ENCODE measurements at regions of chr18 and their contacts with region 1.

Region 1: DNA sequence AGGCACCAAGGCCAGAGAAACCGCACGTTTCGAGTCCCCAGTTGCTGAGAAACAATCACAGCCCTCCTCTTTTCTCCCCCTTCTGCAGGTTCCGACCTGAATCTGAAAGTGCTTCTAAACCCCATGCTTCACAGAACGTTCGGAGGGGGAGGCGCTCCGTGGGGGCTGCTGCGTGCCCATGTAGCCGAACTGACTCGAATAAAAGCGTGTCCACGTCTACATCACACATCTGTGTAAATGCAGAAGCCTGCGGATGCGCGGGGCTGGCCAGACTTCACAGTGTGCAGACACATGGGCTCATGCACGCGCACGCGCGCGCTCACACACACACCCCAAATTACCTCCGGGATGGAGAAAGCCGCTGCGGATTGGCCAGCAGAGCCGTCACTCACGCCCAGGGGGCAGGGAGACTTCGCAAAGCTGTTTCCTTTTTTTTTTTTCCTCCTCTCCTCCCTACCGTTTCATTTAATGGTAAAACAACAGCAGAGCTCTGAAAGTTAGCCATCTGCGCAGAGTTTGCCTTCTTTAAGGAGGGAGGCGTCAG is 2.3 kb downstream of the ZNF516 start:
- DNase-seq: peak; percentile 95
- ATAC-seq: peak; percentile 72
- H3K4me3 ChIP-seq: peak overlapping the region; percentile 84 to 96 (median 84)
- H3K27ac ChIP-seq: peak overlapping the region; percentile 100
- H3K4me1 ChIP-seq: peaks cover 35% of the 10 kb centered on the region
- H3K27me3 ChIP-seq: no peaks in the 10 kb centered on the region; a peak in 1 of 5 replicates
- CTCF ChIP-seq: no peak
- EP300 ChIP-seq: no peak
- POLR2A ChIP-seq: peak; percentile 39 to 70; a peak in 3 of 4 replicates
- RAD21 ChIP-seq: no peak

Region 2: DNA sequence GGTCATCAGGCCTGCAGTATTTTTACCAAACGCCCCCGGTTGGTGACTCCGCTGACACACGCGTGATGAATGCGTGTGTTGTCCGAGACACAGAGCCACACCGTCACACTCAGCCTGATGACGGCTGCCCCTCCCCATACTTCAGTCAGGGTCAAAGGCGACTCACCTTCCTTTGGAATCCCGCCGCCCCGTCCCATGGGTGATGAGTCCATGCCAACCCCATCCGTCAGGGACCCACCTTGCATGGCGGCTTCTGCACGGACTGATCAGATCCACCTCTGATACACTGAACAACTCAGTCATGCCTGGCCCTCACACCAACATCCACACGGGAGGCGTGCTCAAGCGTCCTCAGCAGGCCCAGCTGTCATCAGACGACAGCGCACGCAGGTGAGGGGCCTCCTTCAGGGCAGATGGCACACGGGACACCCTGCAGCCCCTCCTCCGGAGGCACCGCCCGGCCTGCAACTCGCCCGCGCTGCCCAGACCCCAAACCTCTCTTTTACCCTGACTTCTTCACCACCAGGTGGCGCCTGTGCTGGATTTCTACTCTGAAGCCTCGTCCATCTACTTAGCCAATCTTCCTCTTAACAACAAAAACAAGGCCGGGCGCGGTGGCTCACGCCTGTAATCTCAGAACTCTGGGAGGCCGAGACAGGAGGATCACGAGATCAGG is 86.9 kb before region 1 on chr18:
- CTCF ChIA-PET with region 1: no interaction called
- POLR2A ChIA-PET with region 1: no interaction called
- in situ Hi-C with region 1: no loop called
- intact Hi-C with region 1: loop called (anchors 10 kb)
- DNase-seq: peak; percentile 34
- ATAC-seq: peak; percentile 75
- H3K4me3 ChIP-seq: no peak overlapping the region
- H3K27ac ChIP-seq: no peak overlapping the region
- H3K4me1 ChIP-seq: no peaks in the 10 kb centered on the region
- H3K27me3 ChIP-seq: no peaks in the 10 kb centered on the region
- CTCF ChIP-seq: peak; percentile 73
- EP300 ChIP-seq: no peak
- POLR2A ChIP-seq: no peak
- RAD21 ChIP-seq: peak; percentile 49; the same call in 1 of the 2 replicates

Region 3: DNA sequence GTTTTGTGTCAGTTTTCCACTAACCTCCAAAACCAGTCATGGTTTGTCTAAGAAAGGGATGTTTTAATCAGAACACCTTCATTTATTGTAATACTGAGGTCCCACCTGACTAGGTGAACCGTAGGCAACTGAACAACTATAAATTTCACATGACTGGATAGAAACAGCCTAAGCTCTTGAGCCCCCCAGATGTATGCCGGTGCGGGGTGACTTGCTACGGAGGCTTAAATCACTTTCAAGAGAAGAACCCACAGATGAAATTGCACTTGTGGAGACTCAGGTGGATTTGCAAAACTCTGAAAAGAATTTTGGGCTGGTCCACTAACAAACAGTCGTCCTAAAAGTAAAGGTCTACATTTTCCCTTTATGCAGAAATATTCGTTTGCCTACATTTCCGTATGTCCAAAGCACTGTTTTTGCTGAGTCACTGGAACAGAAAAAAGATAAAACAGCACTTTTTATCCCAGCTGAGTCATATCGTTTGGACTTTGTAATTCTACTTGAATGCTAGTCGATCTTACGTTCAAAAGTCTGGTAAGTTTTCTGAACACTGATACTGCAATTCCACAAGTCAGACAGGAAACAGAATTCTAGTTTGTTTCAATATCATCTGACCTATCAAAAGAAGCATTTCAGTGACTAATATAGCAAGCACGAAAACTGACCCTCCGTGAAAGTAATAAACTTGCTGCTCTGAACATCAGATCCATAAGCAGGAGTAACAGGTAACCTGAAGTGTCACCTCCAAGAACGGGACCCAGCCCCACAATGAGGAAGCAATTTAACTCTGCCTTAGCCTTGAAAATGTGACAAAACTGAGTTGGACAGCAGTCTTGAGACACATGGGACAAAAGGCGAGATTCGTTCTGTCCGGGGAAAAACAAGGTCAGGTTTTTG is 15.8 kb before region 1 on chr18:
- CTCF ChIA-PET with region 1: no interaction called
- POLR2A ChIA-PET with region 1: interaction called, 9 read pairs
- in situ Hi-C with region 1: no loop called
- intact Hi-C with region 1: loop called (anchors 2 kb)
- DNase-seq: peak; percentile 88
- ATAC-seq: peak; percentile 58
- H3K4me3 ChIP-seq: peak overlapping the region; percentile 26 to 53 (median 32); a peak in 5 of 6 replicates
- H3K27ac ChIP-seq: peak overlapping the region; percentile 74
- H3K4me1 ChIP-seq: peaks cover 77% of the 10 kb centered on the region
- H3K27me3 ChIP-seq: no peaks in the 10 kb centered on the region
- CTCF ChIP-seq: no peak
- EP300 ChIP-seq: peak in 1 of 2 experiments; percentile 39; a peak in 1 of 4 replicates
- POLR2A ChIP-seq: no peak
- RAD21 ChIP-seq: no peak

Region 4: GRCh38 chr18:76503649-76504398 is 11.1 kb after region 1 on chr18:
- CTCF ChIA-PET with region 1: no interaction called
- POLR2A ChIA-PET with region 1: interaction called, 22 read pairs
- in situ Hi-C with region 1: no loop called
- intact Hi-C with region 1: no loop called
- DNase-seq: no peak
- ATAC-seq: peak; percentile 45; the same call in 2 of the 3 replicates
- H3K4me3 ChIP-seq: no peak overlapping the region
- H3K27ac ChIP-seq: no peak overlapping the region
- H3K4me1 ChIP-seq: peaks cover 24% of the 10 kb centered on the region
- H3K27me3 ChIP-seq: peaks cover 1 to 18% of the 10 kb centered on the region in 2 experiments; a peak in 2 of 5 replicates
- CTCF ChIP-seq: no peak
- EP300 ChIP-seq: no peak
- POLR2A ChIP-seq: no peak
- RAD21 ChIP-seq: no peak

Region 5: DNA sequence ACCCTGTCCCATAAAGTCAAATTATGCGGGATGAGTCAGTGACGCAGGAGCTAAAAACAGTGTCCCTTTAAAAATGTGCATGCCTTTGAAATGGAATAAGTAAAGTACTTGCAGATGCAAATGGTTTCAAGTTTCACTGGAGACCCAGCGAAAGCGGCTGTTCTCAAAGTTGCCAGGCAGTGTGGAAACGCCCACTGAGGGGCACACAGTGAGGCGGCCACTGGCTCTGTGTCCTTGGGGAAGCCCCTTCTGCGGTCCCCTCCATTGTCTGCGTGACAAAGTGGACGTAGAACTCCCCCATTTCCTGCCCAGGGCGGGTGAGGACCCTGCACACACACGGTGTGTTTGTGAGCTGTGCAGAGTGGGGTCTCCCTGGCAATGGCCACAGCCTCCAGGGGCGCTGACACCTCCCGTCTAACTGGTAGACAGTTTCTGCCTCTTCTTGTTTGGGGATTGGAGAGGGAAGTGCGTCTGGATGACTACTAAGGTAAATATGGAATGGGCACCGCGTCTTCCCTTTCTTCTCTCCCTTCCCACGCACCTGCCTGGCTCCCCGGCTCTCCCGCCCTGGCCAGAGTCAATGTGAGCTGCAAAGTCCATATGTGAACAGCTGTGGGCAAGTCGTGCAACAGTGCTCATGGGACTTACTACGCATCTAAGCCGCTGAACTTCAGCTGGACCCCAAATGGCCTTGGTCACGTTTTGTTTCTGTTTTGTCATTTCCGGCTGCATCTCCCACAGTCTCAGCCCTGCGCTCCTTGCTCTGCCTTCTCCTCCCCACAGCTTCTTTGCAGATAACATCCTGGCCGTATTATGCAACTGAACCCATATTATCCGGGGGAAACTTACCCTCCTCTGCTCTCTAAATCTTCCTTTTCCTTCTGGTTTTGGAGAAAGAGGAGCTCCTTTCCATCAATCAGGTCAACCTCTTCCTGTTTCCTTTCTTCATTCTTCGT is 36.0 kb after region 1 on chr18:
- CTCF ChIA-PET with region 1: no interaction called
- POLR2A ChIA-PET with region 1: interaction called, 7 read pairs
- in situ Hi-C with region 1: no loop called
- intact Hi-C with region 1: loop called (anchors 1 kb)
- DNase-seq: peak; percentile 50
- ATAC-seq: peak; percentile 85
- H3K4me3 ChIP-seq: peak overlapping the region; percentile 47 to 68 (median 49)
- H3K27ac ChIP-seq: no peak overlapping the region
- H3K4me1 ChIP-seq: peaks cover 25% of the 10 kb centered on the region
- H3K27me3 ChIP-seq: peaks cover 0 to 31% of the 10 kb centered on the region in 2 experiments; a peak in 3 of 5 replicates
- CTCF ChIP-seq: no peak
- EP300 ChIP-seq: no peak
- POLR2A ChIP-seq: no peak
- RAD21 ChIP-seq: no peak

Region 6: DNA sequence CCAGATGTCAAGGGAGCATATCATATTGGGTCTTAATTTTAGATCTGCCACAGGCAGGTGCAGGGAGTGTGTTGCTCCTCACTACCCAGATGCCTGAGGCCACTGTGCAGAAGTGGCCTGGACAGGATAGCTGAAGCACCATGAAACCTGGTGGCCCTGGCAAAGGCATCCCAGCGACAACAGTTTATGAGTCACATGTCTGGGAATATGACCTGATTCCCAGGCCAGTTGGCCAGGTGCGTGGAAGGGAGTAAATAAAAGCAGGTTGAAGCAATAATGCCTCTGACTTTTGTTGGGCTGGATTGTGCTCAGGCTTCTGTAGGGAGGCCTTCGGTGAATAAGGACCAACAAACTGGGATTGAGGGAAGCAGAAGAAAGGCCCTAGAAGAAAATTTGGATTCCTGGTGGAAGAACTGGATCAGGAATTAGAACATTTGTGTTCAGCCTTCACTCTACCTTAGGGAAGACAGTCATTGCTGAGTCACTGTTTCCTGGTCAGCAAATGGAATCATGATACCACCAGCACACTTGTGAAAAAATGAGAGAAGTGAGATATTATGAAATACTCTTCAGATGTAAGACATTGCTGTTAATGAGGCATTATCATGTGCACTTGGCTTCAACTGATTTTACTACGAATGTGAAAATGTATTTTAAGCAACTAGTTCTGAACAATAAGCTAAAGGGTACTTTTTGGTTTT is 80.7 kb after region 1 on chr18:
- CTCF ChIA-PET with region 1: no interaction called
- POLR2A ChIA-PET with region 1: no interaction called
- in situ Hi-C with region 1: no loop called
- intact Hi-C with region 1: loop called (anchors 5 kb)
- DNase-seq: no peak
- ATAC-seq: peak; percentile 38
- H3K4me3 ChIP-seq: no peak overlapping the region
- H3K27ac ChIP-seq: no peak overlapping the region
- H3K4me1 ChIP-seq: peaks cover 13% of the 10 kb centered on the region
- H3K27me3 ChIP-seq: peaks cover 3 to 4% of the 10 kb centered on the region in 2 experiments; a peak in 2 of 5 replicates
- CTCF ChIP-seq: no peak
- EP300 ChIP-seq: no peak
- POLR2A ChIP-seq: no peak
- RAD21 ChIP-seq: no peak

Region 7: DNA sequence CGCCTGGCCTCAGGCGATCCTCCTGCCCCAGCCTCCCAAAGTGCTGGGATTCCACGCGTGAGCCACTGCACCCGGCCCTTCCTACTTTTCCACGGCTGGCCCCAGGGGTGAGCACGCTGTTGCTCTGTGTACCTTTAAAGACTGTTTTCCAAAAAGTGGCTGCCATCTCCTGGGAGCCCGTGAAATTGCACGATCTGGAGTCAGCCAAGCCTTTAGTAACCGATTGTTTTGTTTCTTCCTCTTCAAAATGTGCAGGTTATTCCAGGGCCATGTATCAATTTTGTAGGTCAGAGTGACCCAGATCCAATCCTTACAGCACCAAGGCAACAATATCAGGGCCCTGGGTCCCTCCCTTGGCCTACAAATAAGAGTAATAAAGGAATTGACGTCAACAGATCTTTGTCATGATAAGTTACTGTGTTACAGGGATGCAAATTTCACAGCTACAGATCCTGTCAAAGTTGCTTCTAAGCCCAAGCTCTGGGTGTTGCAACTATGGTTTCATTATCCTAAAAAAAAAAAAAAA is 194.1 kb after region 1 on chr18:
- CTCF ChIA-PET with region 1: no interaction called
- POLR2A ChIA-PET with region 1: no interaction called
- in situ Hi-C with region 1: no loop called
- intact Hi-C with region 1: loop called (anchors 2 kb)
- DNase-seq: peak; percentile 48
- ATAC-seq: peak; percentile 92
- H3K4me3 ChIP-seq: no peak overlapping the region
- H3K27ac ChIP-seq: no peak overlapping the region
- H3K4me1 ChIP-seq: no peaks in the 10 kb centered on the region
- H3K27me3 ChIP-seq: peaks cover 0 to 59% of the 10 kb centered on the region in 2 experiments; a peak in 4 of 5 replicates
- CTCF ChIP-seq: peak; percentile 77
- EP300 ChIP-seq: no peak
- POLR2A ChIP-seq: no peak
- RAD21 ChIP-seq: peak; percentile 43; the same call in 1 of the 2 replicates

Measured in HepG2 (cell line).